Aorta (tissue), 5 donors: ENCODE measurements at regions of chr15 and their contacts with region 1.

Region 1: GRCh38 chr15:63402498-63403253 is 21.0 kb upstream of the CA12 start:
- DNase-seq: no peak
- ATAC-seq: peak; percentile 54
- H3K4me3 ChIP-seq: no peak overlapping the region
- H3K27ac ChIP-seq: no peak overlapping the region
- H3K4me1 ChIP-seq: no peaks in the 10 kb centered on the region
- H3K27me3 ChIP-seq: no peaks in the 10 kb centered on the region

Region 2: DNA sequence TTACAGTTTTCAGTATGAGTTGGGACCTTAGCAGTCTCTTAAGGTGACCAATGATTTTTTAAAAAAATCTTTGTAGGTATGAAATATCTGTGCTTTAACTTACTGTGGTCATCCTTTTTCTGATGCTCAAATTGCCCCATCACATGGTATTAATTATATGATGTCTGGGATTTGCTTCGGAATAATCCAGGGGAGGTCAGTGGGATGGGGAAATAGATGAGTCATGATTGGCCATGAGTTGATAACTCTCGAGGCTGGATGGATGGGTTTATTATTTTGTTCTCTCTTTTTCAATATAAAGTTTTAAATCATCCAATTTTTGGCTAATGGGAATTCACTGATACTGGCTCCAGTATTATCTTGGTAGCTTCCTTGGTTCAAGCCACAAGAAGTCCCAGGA is 730.4 kb before region 1 on chr15:
- intact Hi-C with region 1: no loop called
- DNase-seq: no peak
- ATAC-seq: peak; percentile 64
- H3K4me3 ChIP-seq: no peak overlapping the region
- H3K27ac ChIP-seq: no peak overlapping the region
- H3K4me1 ChIP-seq: no peaks in the 10 kb centered on the region
- H3K27me3 ChIP-seq: no peaks in the 10 kb centered on the region

Region 3: DNA sequence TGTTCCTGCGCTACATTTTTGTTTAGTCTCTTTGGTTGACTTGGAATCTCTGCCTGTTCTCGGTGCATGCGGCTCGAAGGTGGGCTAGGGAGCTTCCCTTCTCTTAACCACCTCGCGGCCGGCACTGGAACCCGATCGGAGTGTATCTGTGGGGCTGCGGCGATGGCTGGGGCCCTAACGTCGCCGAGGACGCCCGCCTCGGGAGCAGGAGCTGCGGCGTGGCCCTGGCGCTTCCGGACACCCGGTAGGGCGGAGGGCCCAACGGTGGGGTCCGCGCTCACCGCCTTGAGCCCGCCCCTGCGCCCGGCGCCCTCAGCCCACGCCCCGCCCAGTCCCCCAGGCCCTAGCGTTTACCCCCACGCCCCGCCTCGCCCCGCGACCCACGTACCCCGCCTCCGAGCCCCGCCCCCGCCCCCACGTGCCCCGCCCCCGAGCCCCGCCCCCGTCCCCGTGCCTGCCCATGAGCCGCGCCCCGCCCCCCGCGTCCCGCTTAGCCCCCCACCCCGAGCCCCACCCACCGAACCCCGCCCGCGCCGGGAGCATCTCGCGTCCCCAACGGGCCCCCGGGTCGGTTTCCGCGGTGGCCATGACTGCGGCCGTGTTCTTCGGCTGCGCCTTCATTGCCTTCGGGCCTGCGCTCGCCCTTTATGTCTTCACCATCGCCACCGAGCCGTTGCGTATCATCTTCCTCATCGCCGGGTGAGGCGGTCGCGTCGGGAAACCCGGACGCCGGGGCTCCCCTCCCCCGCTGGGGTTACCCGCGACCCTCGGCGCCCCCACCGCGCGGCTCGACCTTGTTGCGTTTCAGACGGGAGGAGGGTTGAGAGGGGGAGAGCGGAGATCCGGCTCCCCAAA is 125.4 kb before region 1 on chr15 and contains the start of gene APH1B:
- intact Hi-C with region 1: no loop called
- DNase-seq: peak; percentile 91 to 95
- ATAC-seq: peak; percentile 93
- H3K4me3 ChIP-seq: peak within 1 kb of the TSS; percentile 80 to 96
- H3K27ac ChIP-seq: peak within 1 kb of the TSS; percentile 46 to 61
- H3K4me1 ChIP-seq: no peaks in the 10 kb centered on the region
- H3K27me3 ChIP-seq: no peaks in the 10 kb centered on the region
- total RNA-seq, gene APH1B: 24.1 to 28.4 TPM

Region 4: DNA sequence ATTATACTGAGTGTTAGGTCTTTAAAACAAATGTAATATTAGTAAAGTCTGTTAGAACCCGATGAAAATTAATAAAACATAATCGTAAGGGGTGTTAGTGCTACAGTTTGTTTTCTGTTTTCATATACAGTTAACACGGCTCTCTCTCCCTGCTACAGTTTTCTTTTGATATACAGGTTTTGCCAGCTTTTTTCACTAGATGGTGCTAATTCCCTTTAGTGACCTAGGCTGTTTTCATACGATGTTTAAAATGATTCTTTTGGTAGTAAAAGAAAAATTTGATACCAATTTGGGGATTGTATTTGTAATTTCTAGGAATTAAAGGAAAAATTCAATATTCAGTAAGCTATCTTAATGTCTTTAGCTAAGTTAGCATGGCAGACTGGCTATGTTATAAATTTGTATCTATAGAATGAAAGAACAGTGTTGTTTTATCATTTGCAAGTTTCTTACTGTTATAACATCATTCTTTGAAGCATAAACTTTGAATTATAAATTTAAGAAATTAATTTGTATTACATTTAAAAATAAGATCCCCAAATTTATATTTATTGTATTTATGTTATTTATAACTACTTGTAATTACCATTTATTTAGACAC is 113.8 kb before region 1 on chr15:
- intact Hi-C with region 1: loop called (anchors 2 kb)
- DNase-seq: no peak
- ATAC-seq: peak; percentile 86
- H3K4me3 ChIP-seq: no peak overlapping the region
- H3K27ac ChIP-seq: no peak overlapping the region
- H3K4me1 ChIP-seq: peaks cover 5 to 6% of the 10 kb centered on the region in 2 donors
- H3K27me3 ChIP-seq: no peaks in the 10 kb centered on the region

Region 5: GRCh38 chr15:63351170-63351569 is 51.5 kb before region 1 on chr15:
- intact Hi-C with region 1: no loop called
- DNase-seq: no peak
- ATAC-seq: no peak
- H3K4me3 ChIP-seq: no peak overlapping the region
- H3K27ac ChIP-seq: no peak overlapping the region
- H3K4me1 ChIP-seq: no peaks in the 10 kb centered on the region
- H3K27me3 ChIP-seq: no peaks in the 10 kb centered on the region

Region 6: GRCh38 chr15:63362196-63362595 is 40.5 kb before region 1 on chr15:
- intact Hi-C with region 1: loop called in 1 of 2 experiments (anchors 5 kb)
- DNase-seq: peak; percentile 44 to 76
- ATAC-seq: no peak
- H3K4me3 ChIP-seq: no peak overlapping the region
- H3K27ac ChIP-seq: no peak overlapping the region
- H3K4me1 ChIP-seq: no peaks in the 10 kb centered on the region
- H3K27me3 ChIP-seq: no peaks in the 10 kb centered on the region